Activated CD4-positive, alpha-beta memory T cell treated with anti-CD3 and anti-CD28 coated beads for 36 hours (primary cell): ENCODE measurements at regions of chr4 and their contacts with region 1.

Region 1: DNA sequence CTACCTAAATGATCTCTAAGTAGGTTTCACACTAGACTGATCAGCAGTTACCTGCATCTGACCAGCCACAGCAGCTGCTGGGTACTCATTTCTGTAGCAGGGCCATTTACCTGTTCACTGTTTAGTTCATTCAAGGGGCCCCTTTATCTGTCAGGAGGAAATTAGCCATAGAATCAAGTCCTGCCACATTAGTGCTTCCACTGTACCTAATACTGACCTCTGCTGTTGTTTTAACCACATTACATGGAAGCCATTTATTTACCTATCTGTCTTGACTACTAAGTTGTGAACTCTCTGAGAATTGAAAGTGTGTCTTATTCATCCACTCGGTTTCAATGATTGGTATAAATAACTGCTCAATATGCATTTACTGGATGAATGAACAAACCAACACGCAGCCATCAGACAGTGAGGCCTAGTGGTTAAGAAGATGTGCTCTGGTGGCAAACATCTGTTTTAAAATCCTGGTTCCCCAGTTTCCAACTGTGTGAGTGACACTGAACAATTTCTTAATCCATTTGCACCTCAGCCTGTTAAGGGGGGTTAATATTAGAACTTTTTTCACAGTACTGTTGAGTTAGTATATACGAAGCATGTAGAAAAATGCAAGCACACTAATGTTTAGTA is 30.0 kb upstream of the ANXA5 start:
- DNase-seq: peak; percentile 42
- H3K4me3 Mint-ChIP-seq: no peak overlapping the region
- H3K27ac Mint-ChIP-seq: no peak overlapping the region
- H3K4me1 Mint-ChIP-seq: peaks cover 8% of the 10 kb centered on the region
- H3K27me3 Mint-ChIP-seq: peaks cover 2% of the 10 kb centered on the region

Region 2: GRCh38 chr4:121272526-121272925 is 454.2 kb before region 1 on chr4:
- CTCF ChIA-PET with region 1: no interaction called
- POLR2A ChIA-PET with region 1: no interaction called
- intact Hi-C with region 1: no loop called
- DNase-seq: no peak
- H3K4me3 Mint-ChIP-seq: no peak overlapping the region
- H3K27ac Mint-ChIP-seq: peak overlapping the region; percentile 56
- H3K4me1 Mint-ChIP-seq: peaks cover 16% of the 10 kb centered on the region
- H3K27me3 Mint-ChIP-seq: peaks cover 7% of the 10 kb centered on the region

Region 3: DNA sequence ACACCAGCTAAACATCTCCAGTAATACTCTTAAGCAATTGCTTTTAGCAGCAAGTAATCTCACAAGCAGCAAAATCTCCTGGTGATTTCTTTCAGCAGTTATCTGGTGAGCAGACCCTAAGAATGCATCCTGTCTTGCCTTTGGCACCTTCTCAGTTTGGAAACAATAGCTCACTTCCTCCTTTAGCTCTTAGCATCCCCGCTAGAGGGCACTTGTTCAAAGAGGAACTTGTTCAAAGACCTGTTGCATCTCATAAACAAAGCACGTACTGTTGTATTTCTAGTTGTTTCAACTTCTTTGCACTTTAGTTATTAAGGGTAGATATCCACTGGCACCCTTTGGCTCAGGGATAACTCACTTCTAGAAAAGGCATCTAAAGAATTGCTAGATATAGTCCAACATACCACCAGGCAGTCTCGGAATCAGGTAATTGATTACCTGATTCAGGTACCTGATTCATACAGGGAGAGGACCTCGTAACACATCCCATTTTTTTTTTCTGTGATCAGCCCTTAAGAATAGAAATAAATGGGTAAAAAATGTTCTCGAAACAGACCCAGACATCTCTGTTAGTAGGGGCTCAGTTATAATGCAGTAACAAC is 264.0 kb before region 1 on chr4:
- CTCF ChIA-PET with region 1: interaction called, 6 read pairs
- POLR2A ChIA-PET with region 1: no interaction called
- intact Hi-C with region 1: loop called (anchors 2 kb)
- DNase-seq: peak; percentile 35
- H3K4me3 Mint-ChIP-seq: no peak overlapping the region
- H3K27ac Mint-ChIP-seq: no peak overlapping the region
- H3K4me1 Mint-ChIP-seq: no peaks in the 10 kb centered on the region
- H3K27me3 Mint-ChIP-seq: peaks cover 26% of the 10 kb centered on the region

Region 4: GRCh38 chr4:121484633-121485032 is 242.1 kb before region 1 on chr4:
- CTCF ChIA-PET with region 1: interaction called, 5 read pairs
- POLR2A ChIA-PET with region 1: no interaction called
- intact Hi-C with region 1: loop called (anchors 1 kb)
- DNase-seq: peak; percentile 31
- H3K4me3 Mint-ChIP-seq: no peak overlapping the region
- H3K27ac Mint-ChIP-seq: no peak overlapping the region
- H3K4me1 Mint-ChIP-seq: no peaks in the 10 kb centered on the region
- H3K27me3 Mint-ChIP-seq: peaks cover 25% of the 10 kb centered on the region

Region 5: DNA sequence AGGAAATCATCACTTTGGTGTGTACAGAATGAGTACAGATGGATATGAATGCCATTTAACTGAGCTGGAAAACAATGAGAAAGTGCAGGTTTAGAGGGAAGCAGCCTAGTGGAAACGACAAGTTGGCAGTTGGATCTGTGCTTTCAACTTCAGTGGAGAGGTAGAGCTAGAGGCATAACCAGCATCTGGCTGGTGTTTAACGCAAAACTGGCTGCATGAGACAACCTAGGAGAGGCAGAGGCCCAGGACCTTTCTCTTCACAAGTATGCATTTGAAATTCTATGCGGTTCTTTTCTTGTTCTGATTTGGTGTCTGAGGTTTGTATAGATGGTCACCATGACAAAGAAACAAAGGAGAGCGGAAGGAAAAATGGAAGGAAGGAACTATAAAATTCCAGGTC is 93.1 kb before region 1 on chr4:
- CTCF ChIA-PET with region 1: no interaction called
- POLR2A ChIA-PET with region 1: no interaction called
- intact Hi-C with region 1: no loop called
- DNase-seq: no peak
- H3K4me3 Mint-ChIP-seq: no peak overlapping the region
- H3K27ac Mint-ChIP-seq: no peak overlapping the region
- H3K4me1 Mint-ChIP-seq: no peaks in the 10 kb centered on the region
- H3K27me3 Mint-ChIP-seq: peaks cover 8% of the 10 kb centered on the region

Region 6: DNA sequence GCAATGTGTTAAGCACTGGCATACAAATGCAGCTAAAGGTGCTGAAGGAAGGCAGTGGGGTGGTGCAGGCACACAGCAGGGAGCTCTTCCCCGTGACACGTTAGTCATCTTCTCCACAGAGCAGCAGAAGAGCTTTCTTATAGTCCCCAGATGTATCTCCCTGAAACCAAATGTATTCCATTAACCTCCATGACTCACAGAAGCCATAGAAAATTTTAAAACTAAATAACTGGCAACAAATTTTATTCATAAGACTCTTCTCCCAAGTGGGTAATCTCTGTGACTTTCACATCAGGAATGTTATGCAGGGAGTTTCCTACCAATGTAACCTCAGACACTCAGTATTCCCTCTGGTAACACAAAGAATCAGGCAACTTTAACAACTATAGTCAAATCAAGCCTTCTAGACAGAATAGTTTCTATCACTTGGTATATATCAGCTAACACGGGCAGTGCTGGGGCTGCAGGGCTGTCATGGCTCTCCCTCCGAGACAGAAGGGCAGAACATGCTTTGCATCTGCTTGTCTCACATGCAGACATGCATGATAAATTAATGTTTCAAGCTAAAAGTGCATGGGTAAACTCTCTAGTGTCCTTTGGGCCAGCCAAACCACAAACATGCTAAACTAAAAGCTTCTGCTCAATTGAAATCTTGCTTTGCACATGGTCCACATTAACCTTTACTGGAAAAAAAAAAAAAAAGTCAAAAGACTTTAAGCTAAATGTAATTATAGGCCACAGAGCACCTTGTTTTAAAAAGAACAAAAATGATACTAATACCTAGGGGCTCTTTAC is 58.2 kb before region 1 on chr4:
- CTCF ChIA-PET with region 1: no interaction called
- POLR2A ChIA-PET with region 1: no interaction called
- intact Hi-C with region 1: loop called (anchors 5 kb)
- DNase-seq: no peak
- H3K4me3 Mint-ChIP-seq: no peak overlapping the region
- H3K27ac Mint-ChIP-seq: no peak overlapping the region
- H3K4me1 Mint-ChIP-seq: no peaks in the 10 kb centered on the region
- H3K27me3 Mint-ChIP-seq: no peaks in the 10 kb centered on the region

Region 7: GRCh38 chr4:121696581-121697461 is 29.9 kb before region 1 on chr4 and contains the start of gene ANXA5:
- CTCF ChIA-PET with region 1: interaction called, 7 read pairs
- POLR2A ChIA-PET with region 1: no interaction called
- intact Hi-C with region 1: loop called (anchors 1 kb)
- DNase-seq: peak; percentile 86
- H3K4me3 Mint-ChIP-seq: peak within 1 kb of the TSS; percentile 99
- H3K27ac Mint-ChIP-seq: peak within 1 kb of the TSS; percentile 99
- H3K4me1 Mint-ChIP-seq: peaks cover 37% of the 10 kb centered on the region
- H3K27me3 Mint-ChIP-seq: peaks cover 10% of the 10 kb centered on the region
- total RNA-seq, gene ANXA5: 132 to 140 TPM

Region 8: GRCh38 chr4:121706595-121707021 is 20.1 kb before region 1 on chr4:
- CTCF ChIA-PET with region 1: interaction called, 3 read pairs
- POLR2A ChIA-PET with region 1: no interaction called
- intact Hi-C with region 1: loop called (anchors 1 kb)
- DNase-seq: peak; percentile 83
- H3K4me3 Mint-ChIP-seq: no peak overlapping the region
- H3K27ac Mint-ChIP-seq: peak overlapping the region; percentile 59
- H3K4me1 Mint-ChIP-seq: peaks cover 38% of the 10 kb centered on the region
- H3K27me3 Mint-ChIP-seq: peaks cover 26% of the 10 kb centered on the region